Activated B cell treated with CpG ODN at 0.5 μM for 24 hours (primary cell): ENCODE measurements at regions of chr20 and their contacts with region 1.

Region 1: GRCh38 chr20:63707549-63708300 is at the starts of genes ARFRP1 and ZGPAT:
- DNase-seq: peak; percentile 91
- ATAC-seq: peak; percentile 94
- H3K4me3 Mint-ChIP-seq: peak within 1 kb of the TSS; percentile 87
- H3K27ac Mint-ChIP-seq: peak within 1 kb of the TSS; percentile 72
- H3K4me1 Mint-ChIP-seq: peaks cover 42% of the 10 kb centered on the region
- H3K27me3 Mint-ChIP-seq: no peaks in the 10 kb centered on the region
- CTCF ChIP-seq: no peak
- total RNA-seq, gene ARFRP1: 63.5 and 66.0 TPM in 2 replicates
- total RNA-seq, gene ZGPAT: 40.7 and 44.0 TPM in 2 replicates

Region 2: DNA sequence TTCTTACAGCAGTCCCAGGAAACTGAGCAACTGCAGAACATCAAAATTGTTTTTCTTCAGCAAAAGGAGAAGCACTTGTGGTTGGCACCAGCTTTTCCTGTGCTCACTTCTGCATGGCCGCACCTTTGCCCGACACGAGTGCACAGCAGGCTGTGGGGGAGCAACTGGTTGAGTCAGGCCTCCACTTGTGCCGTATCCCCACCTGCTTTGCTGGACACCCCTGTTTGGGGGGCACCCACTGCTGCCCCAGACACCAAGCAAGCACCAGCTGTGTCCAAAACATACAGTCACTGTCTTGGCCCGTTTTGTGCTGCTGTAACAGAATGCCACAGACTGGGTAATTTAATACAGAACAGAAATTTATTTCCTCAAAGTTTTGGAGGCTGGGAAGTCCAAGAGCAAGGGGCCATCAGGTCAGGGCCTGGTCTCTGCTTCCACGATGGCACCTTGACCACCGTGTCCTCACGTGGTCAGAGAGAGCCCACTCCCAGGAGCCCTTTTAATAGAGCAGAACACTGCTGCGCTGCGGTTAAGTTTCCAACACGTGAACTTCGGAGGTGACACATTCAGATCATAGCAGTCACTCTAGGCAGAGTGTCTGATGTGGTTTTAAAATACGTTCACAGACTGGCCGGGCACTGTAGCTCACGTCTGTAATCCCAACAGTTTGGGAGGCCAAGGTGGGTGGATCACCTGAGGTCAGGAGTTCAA is 72.1 kb before region 1 on chr20:
- CTCF ChIA-PET with region 1: no interaction called
- POLR2A ChIA-PET with region 1: no interaction called
- intact Hi-C with region 1: loop called (anchors 5 kb)
- DNase-seq: peak; percentile 57
- ATAC-seq: peak; percentile 65
- H3K4me3 Mint-ChIP-seq: peak overlapping the region; percentile 64
- H3K27ac Mint-ChIP-seq: peak overlapping the region; percentile 97
- H3K4me1 Mint-ChIP-seq: peaks cover 83% of the 10 kb centered on the region
- H3K27me3 Mint-ChIP-seq: no peaks in the 10 kb centered on the region
- CTCF ChIP-seq: no peak

Region 3: DNA sequence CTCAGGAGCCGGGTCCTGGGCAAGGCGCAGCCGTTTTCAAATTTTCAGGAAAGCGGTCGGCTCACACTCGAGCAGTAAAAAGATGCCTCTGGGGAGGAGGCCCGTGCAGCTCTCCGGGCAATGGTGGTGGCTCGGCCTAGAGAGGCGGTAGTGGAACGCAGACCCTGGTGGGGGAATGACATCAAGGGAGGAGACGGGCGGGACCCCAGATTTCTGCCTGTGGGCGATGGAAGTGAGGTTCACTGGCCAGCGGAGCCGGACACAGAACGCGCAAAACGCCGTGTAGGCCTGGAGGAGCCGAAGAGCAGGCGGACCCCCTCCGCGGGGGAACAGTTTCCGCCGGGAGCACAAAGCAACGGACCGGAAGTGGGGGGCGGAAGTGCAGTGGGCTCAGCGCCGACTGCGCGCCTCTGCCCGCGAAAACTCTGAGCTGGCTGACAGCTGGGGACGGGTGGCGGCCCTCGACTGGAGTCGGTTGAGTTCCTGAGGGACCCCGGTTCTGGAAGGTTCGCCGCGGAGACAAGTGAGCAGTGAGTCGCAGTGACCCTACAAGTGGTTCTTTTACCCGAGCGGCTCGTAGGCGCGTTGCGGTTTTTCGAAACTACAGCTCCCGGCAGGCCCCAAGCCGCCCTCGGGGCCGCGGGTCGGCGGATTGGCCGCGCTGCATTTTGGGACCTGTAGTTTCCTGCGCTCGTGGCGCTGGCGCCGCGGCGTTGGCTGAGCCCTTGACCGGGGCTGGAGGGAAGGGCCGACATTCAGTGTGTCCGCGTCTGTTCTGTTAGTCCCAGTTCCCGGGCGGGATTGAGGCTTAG is 49.6 kb before region 1 on chr20 and contains the start of gene RTEL1:
- CTCF ChIA-PET with region 1: no interaction called
- POLR2A ChIA-PET with region 1: interaction called, 19 read pairs
- intact Hi-C with region 1: loop called (anchors 1 kb)
- DNase-seq: peak; percentile 95
- ATAC-seq: peak; percentile 88
- H3K4me3 Mint-ChIP-seq: peak within 1 kb of the TSS; percentile 97
- H3K27ac Mint-ChIP-seq: peak within 1 kb of the TSS; percentile 93
- H3K4me1 Mint-ChIP-seq: peaks cover 27% of the 10 kb centered on the region
- H3K27me3 Mint-ChIP-seq: peaks cover 3% of the 10 kb centered on the region
- CTCF ChIP-seq: no peak
- total RNA-seq, gene RTEL1: 24.1 and 33.8 TPM in 2 replicates

Region 4: GRCh38 chr20:63733186-63734081 is 25.7 kb after region 1 on chr20:
- CTCF ChIA-PET with region 1: interaction called, 8 read pairs
- POLR2A ChIA-PET with region 1: interaction called, 36 read pairs
- intact Hi-C with region 1: loop called (anchors 2 kb)
- DNase-seq: no peak
- ATAC-seq: no peak
- H3K4me3 Mint-ChIP-seq: no peak overlapping the region
- H3K27ac Mint-ChIP-seq: no peak overlapping the region
- H3K4me1 Mint-ChIP-seq: peaks cover 28% of the 10 kb centered on the region
- H3K27me3 Mint-ChIP-seq: no peaks in the 10 kb centered on the region
- CTCF ChIP-seq: no peak

Region 5: DNA sequence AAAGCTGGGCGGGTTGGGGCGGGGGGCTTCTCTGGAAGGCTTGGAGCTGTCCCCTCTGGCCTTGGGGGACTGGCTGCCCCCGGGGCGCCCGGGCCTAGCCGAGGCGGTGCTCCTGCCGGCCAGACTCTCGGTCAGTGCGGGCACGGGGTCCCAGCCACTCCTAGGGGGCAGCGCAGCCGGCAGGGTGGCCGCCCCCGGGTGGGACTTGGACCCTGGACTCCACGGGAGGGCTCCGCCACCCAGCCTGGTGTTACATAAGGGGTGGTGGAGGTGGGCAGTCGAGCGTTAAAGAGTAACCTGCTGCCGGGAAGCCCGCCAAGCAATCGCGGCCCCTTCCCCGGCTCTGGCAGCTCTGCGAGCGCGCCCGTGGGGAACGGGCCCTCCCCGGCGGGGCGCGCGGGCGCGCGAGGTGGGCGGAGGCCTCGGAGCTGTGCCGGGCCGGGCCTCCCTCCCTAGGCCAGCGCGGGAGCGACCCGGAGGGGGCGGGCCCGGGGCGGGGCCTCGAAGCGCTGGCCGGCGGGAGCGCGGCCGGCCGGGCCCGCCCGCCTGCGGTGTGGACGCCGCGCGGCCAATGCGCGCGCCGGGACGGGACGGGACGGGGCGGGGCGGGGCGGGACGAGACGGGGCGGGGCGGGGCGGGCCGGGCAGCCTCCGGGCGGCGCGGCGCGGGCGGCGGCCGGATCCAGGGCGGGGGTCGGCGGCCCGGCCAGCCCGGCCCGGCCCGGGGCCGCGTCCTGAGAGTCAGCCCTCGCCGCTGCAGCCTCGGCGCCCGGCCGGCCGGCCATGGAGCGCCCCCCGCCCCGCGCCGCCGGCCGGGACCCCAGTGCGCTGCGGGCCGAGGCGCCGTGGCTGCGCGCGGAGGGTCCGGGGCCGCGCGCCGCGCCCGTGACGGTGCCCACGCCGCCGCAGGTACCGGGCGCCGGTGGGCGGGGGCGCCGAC is 31.7 kb after region 1 on chr20 and contains the start of gene SLC2A4RG:
- CTCF ChIA-PET with region 1: interaction called, 8 read pairs
- POLR2A ChIA-PET with region 1: interaction called, 36 read pairs
- intact Hi-C with region 1: loop called (anchors 2 kb)
- DNase-seq: peak; percentile 73
- ATAC-seq: peak; percentile 65
- H3K4me3 Mint-ChIP-seq: peak within 1 kb of the TSS; percentile 48
- H3K27ac Mint-ChIP-seq: no peak within 1 kb of the TSS
- H3K4me1 Mint-ChIP-seq: peaks cover 28% of the 10 kb centered on the region
- H3K27me3 Mint-ChIP-seq: no peaks in the 10 kb centered on the region
- CTCF ChIP-seq: no peak
- total RNA-seq, gene SLC2A4RG: 20.9 and 28.1 TPM in 2 replicates

Region 6: GRCh38 chr20:63782051-63782471 is 74.3 kb after region 1 on chr20:
- CTCF ChIA-PET with region 1: no interaction called
- POLR2A ChIA-PET with region 1: interaction called, 5 read pairs
- intact Hi-C with region 1: loop called (anchors 5 kb)
- DNase-seq: no peak
- ATAC-seq: peak; percentile 33
- H3K4me3 Mint-ChIP-seq: no peak overlapping the region
- H3K27ac Mint-ChIP-seq: no peak overlapping the region
- H3K4me1 Mint-ChIP-seq: peaks cover 6% of the 10 kb centered on the region
- H3K27me3 Mint-ChIP-seq: no peaks in the 10 kb centered on the region
- CTCF ChIP-seq: no peak

Region 7: DNA sequence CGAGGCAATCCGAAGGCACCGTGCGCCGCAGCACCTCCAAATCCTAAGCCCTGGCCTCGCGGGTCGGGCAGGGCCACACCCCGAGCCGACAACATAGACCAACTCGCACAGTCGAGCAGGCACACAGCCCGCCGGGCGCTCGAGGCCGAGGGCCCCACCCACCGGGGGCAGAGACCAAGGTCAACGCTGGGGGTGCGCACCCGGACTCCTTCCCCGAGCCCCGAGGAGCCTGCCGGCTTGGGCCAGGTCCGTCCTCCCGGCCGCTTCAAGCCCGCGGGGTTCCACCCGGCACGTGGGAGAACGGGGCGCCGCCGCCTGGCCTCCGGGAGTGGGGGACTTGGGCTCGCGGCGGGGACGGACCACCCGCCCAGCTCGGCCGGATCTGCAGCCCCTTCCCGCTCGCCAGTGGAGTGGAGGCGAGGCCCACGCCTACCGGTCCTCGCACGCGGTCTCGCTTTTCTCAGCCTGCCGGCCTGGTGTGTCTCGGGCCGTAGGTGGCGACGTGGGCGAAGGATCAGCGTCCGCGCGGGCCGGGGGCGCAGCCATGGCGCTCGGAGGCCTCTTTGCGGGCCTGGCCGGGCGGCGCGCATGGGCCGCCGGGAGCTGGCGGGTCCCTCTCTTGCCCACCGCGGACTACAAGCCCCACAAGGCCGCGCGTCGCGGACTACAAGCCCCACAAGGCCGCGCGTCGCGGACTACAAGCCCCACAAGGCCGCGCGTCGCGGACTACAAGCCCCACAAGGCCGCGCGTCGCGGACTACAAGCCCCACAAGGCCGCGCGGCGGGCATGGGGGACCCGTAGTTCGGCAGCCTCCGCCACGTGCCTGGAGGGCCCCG is 248.3 kb after region 1 on chr20 and contains the start of gene UCKL1:
- CTCF ChIA-PET with region 1: no interaction called
- POLR2A ChIA-PET with region 1: interaction called, 7 read pairs
- intact Hi-C with region 1: loop called (anchors 1 kb)
- DNase-seq: peak; percentile 87
- ATAC-seq: peak; percentile 78
- H3K4me3 Mint-ChIP-seq: peak within 1 kb of the TSS; percentile 87
- H3K27ac Mint-ChIP-seq: peak within 1 kb of the TSS; percentile 85
- H3K4me1 Mint-ChIP-seq: peaks cover 49% of the 10 kb centered on the region
- H3K27me3 Mint-ChIP-seq: no peaks in the 10 kb centered on the region
- CTCF ChIP-seq: no peak
- total RNA-seq, gene UCKL1: 43.6 and 49.7 TPM in 2 replicates

Region 8: GRCh38 chr20:64247970-64248841 is 540.5 kb after region 1 on chr20:
- CTCF ChIA-PET with region 1: no interaction called
- POLR2A ChIA-PET with region 1: no interaction called
- intact Hi-C with region 1: no loop called
- DNase-seq: no peak
- ATAC-seq: no peak
- H3K4me3 Mint-ChIP-seq: no peak overlapping the region
- H3K27ac Mint-ChIP-seq: no peak overlapping the region
- H3K4me1 Mint-ChIP-seq: peaks cover 9% of the 10 kb centered on the region
- H3K27me3 Mint-ChIP-seq: peaks cover 37% of the 10 kb centered on the region
- CTCF ChIP-seq: no peak